HepG2 (cell line): ENCODE measurements at regions of chr17 and their contacts with region 1.

Region 1: DNA sequence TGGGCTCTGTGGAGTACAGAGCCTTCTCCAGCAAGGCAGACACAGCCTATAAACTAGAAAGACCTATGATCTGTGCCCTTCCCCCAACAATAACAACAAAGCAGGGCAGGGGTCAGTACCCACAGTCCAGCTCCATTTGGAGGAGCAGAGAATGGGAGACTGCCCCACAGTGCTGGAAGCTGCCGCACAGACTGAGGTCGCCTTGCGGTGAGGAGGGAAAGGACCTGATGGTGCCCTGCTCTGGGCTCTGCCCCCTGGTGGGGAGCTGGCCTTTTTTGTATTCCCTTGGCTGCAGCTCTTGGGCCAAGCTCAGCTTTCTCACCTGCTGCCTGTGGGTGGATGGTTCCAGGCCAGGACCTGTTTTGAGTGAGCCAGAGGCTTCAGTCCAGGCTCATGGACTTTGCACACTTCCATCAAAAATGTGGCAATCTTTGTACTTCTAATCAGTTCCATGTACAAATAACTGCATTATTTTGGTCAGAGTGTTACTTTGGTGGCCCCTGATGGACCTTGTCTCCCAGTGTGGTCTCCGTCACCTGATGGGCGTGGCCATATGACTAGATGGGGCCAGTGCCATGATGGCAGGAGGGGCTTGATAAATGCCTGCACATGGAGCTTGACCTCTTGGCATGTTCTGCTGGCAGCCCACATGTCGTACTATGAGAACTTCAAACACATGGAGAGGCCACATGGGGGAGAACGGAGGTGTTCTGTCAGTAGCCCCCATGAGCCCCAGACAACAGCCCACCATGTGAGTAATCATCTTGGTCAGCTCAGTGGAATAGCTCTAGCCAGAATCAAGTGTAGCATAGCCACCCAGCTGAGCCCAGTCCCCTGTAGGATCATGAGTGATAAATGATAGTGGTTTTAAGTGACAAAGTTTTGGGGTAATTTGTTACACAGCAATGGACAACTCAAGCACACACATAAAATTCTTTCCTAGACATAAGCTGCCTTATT is 24.2 kb downstream of the B9D1 start:
- DNase-seq: peak; percentile 97
- ATAC-seq: peak; percentile 87
- H3K4me3 ChIP-seq: peak overlapping the region; percentile 2 to 61 (median 11); a peak in 3 of 6 replicates
- H3K27ac ChIP-seq: peak overlapping the region; percentile 94
- H3K4me1 ChIP-seq: peaks cover 35% of the 10 kb centered on the region
- H3K27me3 ChIP-seq: no peaks in the 10 kb centered on the region
- CTCF ChIP-seq: peak; percentile 96
- EP300 ChIP-seq: peak; percentile 71 to 87
- POLR2A ChIP-seq: peak; percentile 63 to 68
- RAD21 ChIP-seq: peak; percentile 94

Region 2: GRCh38 chr17:19306160-19307111 is 31.9 kb before region 1 on chr17:
- CTCF ChIA-PET with region 1: no interaction called
- POLR2A ChIA-PET with region 1: interaction called, 11 read pairs
- in situ Hi-C with region 1: no loop called
- intact Hi-C with region 1: no loop called
- DNase-seq: peak; percentile 67
- ATAC-seq: peak; percentile 74
- H3K4me3 ChIP-seq: no peak overlapping the region
- H3K27ac ChIP-seq: peak overlapping the region; percentile 23
- H3K4me1 ChIP-seq: peaks cover 36% of the 10 kb centered on the region
- H3K27me3 ChIP-seq: no peaks in the 10 kb centered on the region
- CTCF ChIP-seq: no peak
- EP300 ChIP-seq: no peak; a peak in 1 of 4 replicates
- POLR2A ChIP-seq: no peak
- RAD21 ChIP-seq: no peak

Region 3: GRCh38 chr17:19317359-19318095 is 20.8 kb before region 1 on chr17:
- CTCF ChIA-PET with region 1: interaction called, 21 read pairs
- POLR2A ChIA-PET with region 1: interaction called, 19 read pairs
- in situ Hi-C with region 1: no loop called
- intact Hi-C with region 1: no loop called
- DNase-seq: peak; percentile 89
- ATAC-seq: peak; percentile 98
- H3K4me3 ChIP-seq: peak overlapping the region in 1 of 3 experiments; percentile 35; a peak in 2 of 6 replicates
- H3K27ac ChIP-seq: peak overlapping the region; percentile 75
- H3K4me1 ChIP-seq: peaks cover 19% of the 10 kb centered on the region
- H3K27me3 ChIP-seq: no peaks in the 10 kb centered on the region
- CTCF ChIP-seq: peak; percentile 97
- EP300 ChIP-seq: no peak
- POLR2A ChIP-seq: peak; percentile 34 to 36; a peak in 1 of 4 replicates
- RAD21 ChIP-seq: peak; percentile 95

Region 4: DNA sequence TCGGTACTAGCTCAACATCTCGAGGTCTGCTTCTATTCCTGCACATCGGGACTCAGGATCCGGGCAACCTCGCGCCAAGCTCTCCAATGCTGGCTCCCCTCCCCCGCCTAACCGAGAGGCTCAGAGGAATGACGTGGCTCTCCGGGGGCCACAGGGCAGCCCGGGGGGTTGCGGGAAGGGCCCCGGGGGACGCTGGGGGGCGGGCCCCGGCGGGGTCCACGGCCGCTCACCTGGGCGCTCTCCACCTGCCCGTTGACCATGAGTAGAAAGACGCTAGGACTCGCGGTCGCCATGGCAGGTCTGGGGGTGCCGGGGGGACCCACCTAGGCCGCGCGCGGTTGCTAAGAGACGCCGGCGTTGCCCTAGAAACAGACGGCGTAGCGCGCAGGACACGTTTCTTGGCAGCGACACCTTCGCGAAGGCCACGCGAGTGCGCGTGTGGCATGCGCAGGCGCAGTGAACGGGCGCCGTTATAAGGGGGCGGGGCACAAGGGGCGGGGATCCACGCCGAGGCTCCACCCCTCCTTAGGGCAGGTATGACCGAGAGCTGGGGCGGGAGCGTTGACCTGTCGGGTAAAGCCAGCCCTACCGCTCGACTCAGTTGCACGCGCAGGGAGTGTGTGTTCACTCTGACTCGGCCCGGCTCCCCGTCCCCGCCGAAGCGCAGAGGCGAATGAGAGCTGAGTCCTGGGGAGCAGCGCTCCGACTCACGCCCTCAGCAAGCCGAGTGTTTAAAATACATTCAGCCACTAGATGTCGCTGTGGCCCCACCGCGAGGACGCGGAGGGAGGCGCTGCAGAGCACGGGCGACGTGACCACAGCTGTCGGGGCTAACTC is 24.2 kb after region 1 on chr17 and contains the start of gene B9D1:
- CTCF ChIA-PET with region 1: interaction called, 9 read pairs
- POLR2A ChIA-PET with region 1: interaction called, 42 read pairs
- in situ Hi-C with region 1: no loop called
- intact Hi-C with region 1: no loop called
- DNase-seq: peak; percentile 77
- ATAC-seq: peak; percentile 74
- H3K4me3 ChIP-seq: peak within 1 kb of the TSS; percentile 65 to 93 (median 74)
- H3K27ac ChIP-seq: peak within 1 kb of the TSS; percentile 74
- H3K4me1 ChIP-seq: peaks cover 58% of the 10 kb centered on the region
- H3K27me3 ChIP-seq: no peaks in the 10 kb centered on the region
- CTCF ChIP-seq: peak; percentile 100
- EP300 ChIP-seq: no peak; a peak in 1 of 4 replicates
- POLR2A ChIP-seq: peak in 1 of 2 experiments; percentile 72; a peak in 3 of 4 replicates
- RAD21 ChIP-seq: peak; percentile 99
- total RNA-seq, gene B9D1: 26.2 and 27.7 TPM in 2 replicates

Region 5: GRCh38 chr17:19377602-19378392 is 39.5 kb after region 1 on chr17:
- CTCF ChIA-PET with region 1: no interaction called
- POLR2A ChIA-PET with region 1: interaction called, 41 read pairs
- in situ Hi-C with region 1: no loop called
- intact Hi-C with region 1: no loop called
- DNase-seq: peak; percentile 98
- ATAC-seq: peak; percentile 89
- H3K4me3 ChIP-seq: peak overlapping the region; percentile 82 to 96 (median 87)
- H3K27ac ChIP-seq: peak overlapping the region; percentile 93
- H3K4me1 ChIP-seq: peaks cover 33% of the 10 kb centered on the region
- H3K27me3 ChIP-seq: peaks cover 0 to 2% of the 10 kb centered on the region in 2 experiments; a peak in 1 of 5 replicates
- CTCF ChIP-seq: peak; percentile 56
- EP300 ChIP-seq: no peak
- POLR2A ChIP-seq: peak; percentile 84 to 86
- RAD21 ChIP-seq: peak; percentile 49; the same call in 1 of the 2 replicates

Region 6: GRCh38 chr17:19424934-19425868 is 86.9 kb after region 1 on chr17:
- CTCF ChIA-PET with region 1: no interaction called
- POLR2A ChIA-PET with region 1: no interaction called
- in situ Hi-C with region 1: no loop called
- intact Hi-C with region 1: no loop called
- DNase-seq: no peak
- ATAC-seq: peak; percentile 33; the same call in 1 of the 3 replicates
- H3K4me3 ChIP-seq: no peak overlapping the region
- H3K27ac ChIP-seq: no peak overlapping the region
- H3K4me1 ChIP-seq: peaks cover 7% of the 10 kb centered on the region
- H3K27me3 ChIP-seq: peaks cover 0 to 7% of the 10 kb centered on the region in 2 experiments; a peak in 1 of 5 replicates
- CTCF ChIP-seq: no peak
- EP300 ChIP-seq: no peak
- POLR2A ChIP-seq: no peak
- RAD21 ChIP-seq: no peak